A673 (cell line): ENCODE measurements at regions of chr10 and their contacts with region 1.

Region 1: GRCh38 chr10:67779465-67780203 is 58.4 kb downstream of the DNAJC12 start:
- DNase-seq: peak; percentile 85
- H3K4me3 ChIP-seq: no peak overlapping the region
- H3K27ac ChIP-seq: no peak overlapping the region
- H3K4me1 ChIP-seq: peaks cover 3% of the 10 kb centered on the region
- H3K27me3 ChIP-seq: no peaks in the 10 kb centered on the region
- CTCF ChIP-seq: peak; percentile 82

Region 2: GRCh38 chr10:66925896-66926715 is 853.5 kb before region 1 on chr10 and contains the start of gene LRRTM3:
- CTCF ChIA-PET with region 1: no interaction called
- POLR2A ChIA-PET with region 1: no interaction called
- intact Hi-C with region 1: loop called (anchors 5 kb)
- DNase-seq: peak; percentile 83
- H3K4me3 ChIP-seq: no peak within 1 kb of the TSS
- H3K27ac ChIP-seq: no peak within 1 kb of the TSS
- H3K4me1 ChIP-seq: no peaks in the 10 kb centered on the region
- H3K27me3 ChIP-seq: peaks cover 62% of the 10 kb centered on the region
- CTCF ChIP-seq: peak; percentile 72
- total RNA-seq, gene LRRTM3: not detected in 2 replicates

Region 3: DNA sequence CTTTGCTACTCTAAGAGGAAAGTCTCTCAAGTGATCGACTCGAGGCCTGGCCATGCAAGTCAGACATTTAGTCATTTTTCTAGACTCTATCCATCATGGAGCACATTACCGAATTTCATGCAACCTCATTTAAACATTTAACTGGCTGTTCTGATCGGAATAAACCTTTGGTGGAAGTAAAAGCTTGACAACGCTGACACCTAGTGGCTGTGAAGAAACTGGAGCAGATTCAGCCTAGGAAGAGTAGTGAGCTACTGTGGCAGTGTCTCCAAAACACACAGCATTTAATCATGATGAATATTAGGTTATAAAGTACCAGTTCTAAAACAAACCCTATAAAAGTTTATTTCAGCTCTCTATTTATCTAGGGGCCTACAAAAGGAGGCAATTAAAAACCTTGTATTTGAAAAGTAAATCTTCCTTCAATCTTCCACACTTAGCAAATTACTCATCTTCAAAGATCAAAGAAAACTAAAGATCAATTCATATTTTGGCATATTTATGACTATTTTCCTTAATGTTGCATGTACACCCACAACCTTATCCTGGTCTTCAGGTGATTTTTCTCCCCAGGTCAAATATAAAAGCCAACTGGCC is 258.6 kb before region 1 on chr10:
- CTCF ChIA-PET with region 1: no interaction called
- POLR2A ChIA-PET with region 1: no interaction called
- intact Hi-C with region 1: loop called (anchors 5 kb)
- DNase-seq: peak; percentile 59
- H3K4me3 ChIP-seq: no peak overlapping the region
- H3K27ac ChIP-seq: no peak overlapping the region
- H3K4me1 ChIP-seq: no peaks in the 10 kb centered on the region
- H3K27me3 ChIP-seq: no peaks in the 10 kb centered on the region
- CTCF ChIP-seq: peak; percentile 88

Region 4: DNA sequence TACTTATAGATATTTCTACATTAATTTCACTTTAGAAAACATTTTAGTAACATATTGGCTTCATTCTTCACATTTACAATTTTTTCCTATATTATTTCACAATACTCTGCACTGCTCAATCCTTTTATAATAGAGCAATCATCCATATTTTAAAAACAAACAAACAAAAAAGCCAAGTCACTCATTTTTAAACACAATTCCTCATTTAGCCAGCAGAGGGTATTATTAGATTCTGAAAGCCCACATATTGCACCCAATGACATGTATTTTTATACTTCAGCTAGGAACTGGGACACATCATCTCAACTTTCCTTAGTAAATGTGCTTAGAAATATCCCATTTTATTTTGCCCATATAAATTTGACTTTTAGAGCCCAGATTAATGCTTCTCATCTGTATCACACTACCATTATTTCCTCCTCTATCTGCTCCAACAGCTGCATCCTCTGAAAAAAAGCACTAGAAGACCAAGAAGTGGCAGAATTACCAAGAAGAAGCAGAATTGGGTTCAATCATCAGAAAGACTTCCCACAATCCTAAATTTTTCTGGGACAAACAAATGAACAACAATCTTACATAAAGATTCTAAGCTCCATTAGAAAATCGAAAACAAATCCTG is 113.1 kb before region 1 on chr10:
- CTCF ChIA-PET with region 1: interaction called, 22 read pairs
- POLR2A ChIA-PET with region 1: no interaction called
- intact Hi-C with region 1: loop called (anchors 1 kb)
- DNase-seq: peak; percentile 56
- H3K4me3 ChIP-seq: no peak overlapping the region
- H3K27ac ChIP-seq: no peak overlapping the region
- H3K4me1 ChIP-seq: peaks cover 11% of the 10 kb centered on the region
- H3K27me3 ChIP-seq: no peaks in the 10 kb centered on the region
- CTCF ChIP-seq: peak; percentile 60

Region 5: GRCh38 chr10:67697724-67698131 is 81.9 kb before region 1 on chr10:
- CTCF ChIA-PET with region 1: interaction called, 29 read pairs
- POLR2A ChIA-PET with region 1: no interaction called
- intact Hi-C with region 1: loop called (anchors 1 kb)
- DNase-seq: peak; percentile 67
- H3K4me3 ChIP-seq: no peak overlapping the region
- H3K27ac ChIP-seq: no peak overlapping the region
- H3K4me1 ChIP-seq: peaks cover 3% of the 10 kb centered on the region
- H3K27me3 ChIP-seq: peaks cover 15% of the 10 kb centered on the region
- CTCF ChIP-seq: peak; percentile 79

Region 6: DNA sequence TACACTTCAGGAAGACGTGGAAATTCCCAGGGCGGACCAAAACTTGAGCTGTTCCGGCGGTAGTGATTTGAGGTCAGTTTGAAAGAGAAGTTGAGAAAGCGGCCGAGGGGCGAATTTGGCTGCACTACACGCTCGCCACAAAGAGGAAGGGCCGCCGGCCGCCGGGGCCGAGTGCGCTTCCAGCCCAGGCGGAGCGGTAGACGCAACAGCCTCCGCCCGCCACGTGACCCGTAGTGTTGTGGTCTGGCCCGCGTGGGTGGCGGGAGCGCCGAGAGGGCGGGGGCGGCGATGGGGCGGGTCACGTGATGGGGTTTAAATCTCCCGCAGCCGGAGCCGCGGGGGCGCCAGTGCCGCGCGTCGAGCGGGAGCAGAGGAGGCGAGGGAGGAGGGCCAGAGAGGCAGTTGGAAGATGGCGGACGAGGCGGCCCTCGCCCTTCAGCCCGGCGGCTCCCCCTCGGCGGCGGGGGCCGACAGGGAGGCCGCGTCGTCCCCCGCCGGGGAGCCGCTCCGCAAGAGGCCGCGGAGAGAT is 104.7 kb after region 1 on chr10 and contains the start of gene SIRT1:
- CTCF ChIA-PET with region 1: no interaction called
- POLR2A ChIA-PET with region 1: no interaction called
- intact Hi-C with region 1: no loop called
- DNase-seq: peak; percentile 98
- H3K4me3 ChIP-seq: peak within 1 kb of the TSS; percentile 92
- H3K27ac ChIP-seq: peak within 1 kb of the TSS; percentile 87
- H3K4me1 ChIP-seq: peaks cover 16% of the 10 kb centered on the region
- H3K27me3 ChIP-seq: no peaks in the 10 kb centered on the region
- CTCF ChIP-seq: 0 out of 2 replicates have a peak, but pooled peaks have one; percentile 7
- total RNA-seq, gene SIRT1: 41.0 and 42.6 TPM in 2 replicates

Region 7: DNA sequence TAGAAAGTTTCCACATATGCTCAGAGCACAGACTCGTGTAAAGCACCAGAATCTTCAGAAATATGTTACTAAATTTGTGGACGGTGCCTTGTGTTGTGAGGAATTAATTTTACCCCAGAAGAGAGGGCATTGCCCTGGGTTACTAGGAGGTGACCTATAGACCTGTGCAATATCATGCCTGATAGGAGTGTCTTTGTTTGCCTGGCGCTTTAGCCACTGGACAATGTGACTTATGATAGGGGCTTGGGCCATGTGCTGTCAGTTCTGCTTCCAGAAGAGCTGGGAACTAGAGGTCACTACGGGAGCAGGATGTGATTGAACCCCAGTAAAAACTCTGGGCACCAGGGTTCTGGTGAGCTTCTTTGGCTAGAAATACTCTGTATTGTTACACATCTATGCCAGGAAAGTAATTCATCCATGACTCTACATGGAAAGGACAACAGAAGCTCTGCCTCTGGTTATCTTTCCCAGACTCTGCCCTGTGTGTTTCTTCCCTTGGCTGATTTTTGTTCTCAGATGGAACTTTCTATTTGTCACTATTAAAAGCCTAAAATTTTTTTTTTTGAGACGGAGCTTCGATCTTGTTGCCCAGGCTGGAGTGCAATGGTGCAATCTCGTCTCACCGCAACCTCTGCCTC is 180.3 kb after region 1 on chr10:
- CTCF ChIA-PET with region 1: no interaction called
- POLR2A ChIA-PET with region 1: no interaction called
- intact Hi-C with region 1: no loop called
- DNase-seq: no peak
- H3K4me3 ChIP-seq: no peak overlapping the region
- H3K27ac ChIP-seq: no peak overlapping the region
- H3K4me1 ChIP-seq: no peaks in the 10 kb centered on the region
- H3K27me3 ChIP-seq: no peaks in the 10 kb centered on the region
- CTCF ChIP-seq: no peak